Activated B cell treated with CpG ODN at 0.5 μM for 24 hours (primary cell): ENCODE measurements at regions of chr2 and their contacts with region 1.

Region 1: DNA sequence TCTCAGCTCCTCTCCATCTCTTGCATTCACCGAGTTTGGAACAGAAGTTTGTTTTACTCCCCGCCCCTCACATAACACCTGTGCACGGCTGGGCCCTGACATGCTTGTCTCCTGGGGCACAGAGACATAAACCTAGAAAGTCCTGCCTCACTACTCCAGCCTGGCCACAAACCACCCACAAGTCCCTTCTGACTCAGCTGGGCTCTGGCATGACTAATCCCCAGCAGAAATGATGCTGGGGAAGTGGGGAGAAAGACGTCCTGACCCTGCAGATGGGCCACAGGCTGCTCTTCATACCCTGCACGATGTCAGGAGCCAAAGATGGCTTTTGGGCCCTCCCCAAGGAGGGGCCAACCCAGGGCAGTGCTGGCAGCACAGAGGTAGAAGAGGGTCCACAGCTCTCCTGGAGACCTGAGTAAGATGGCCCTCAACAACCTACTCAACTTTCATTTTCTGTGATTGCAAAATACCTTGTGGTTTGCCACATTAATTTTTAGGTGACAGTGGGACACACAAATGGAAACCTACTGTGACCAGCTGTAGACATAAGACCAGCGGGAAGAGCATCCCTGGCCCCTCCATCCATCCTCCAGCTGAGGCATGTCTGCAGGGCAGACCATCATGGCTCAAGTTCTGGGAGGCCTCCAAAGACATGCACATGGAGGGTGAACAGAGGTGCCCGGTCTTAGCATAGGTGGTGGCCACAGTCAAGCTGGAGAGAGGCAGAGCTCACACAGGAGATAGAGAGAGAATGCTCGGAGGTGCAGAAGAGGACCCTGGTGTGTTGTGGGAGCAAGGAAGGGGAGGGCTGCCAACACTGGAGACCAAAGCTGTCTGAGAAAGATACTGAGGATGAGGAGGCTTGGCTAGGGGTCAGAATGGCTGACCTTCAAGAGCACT is 40.0 kb downstream of the DNMT3A start:
- DNase-seq: peak; percentile 61
- ATAC-seq: peak; percentile 95
- H3K4me3 Mint-ChIP-seq: peak overlapping the region; percentile 42
- H3K27ac Mint-ChIP-seq: peak overlapping the region; percentile 46
- H3K4me1 Mint-ChIP-seq: peaks cover 39% of the 10 kb centered on the region
- H3K27me3 Mint-ChIP-seq: no peaks in the 10 kb centered on the region
- CTCF ChIP-seq: no peak

Region 2: DNA sequence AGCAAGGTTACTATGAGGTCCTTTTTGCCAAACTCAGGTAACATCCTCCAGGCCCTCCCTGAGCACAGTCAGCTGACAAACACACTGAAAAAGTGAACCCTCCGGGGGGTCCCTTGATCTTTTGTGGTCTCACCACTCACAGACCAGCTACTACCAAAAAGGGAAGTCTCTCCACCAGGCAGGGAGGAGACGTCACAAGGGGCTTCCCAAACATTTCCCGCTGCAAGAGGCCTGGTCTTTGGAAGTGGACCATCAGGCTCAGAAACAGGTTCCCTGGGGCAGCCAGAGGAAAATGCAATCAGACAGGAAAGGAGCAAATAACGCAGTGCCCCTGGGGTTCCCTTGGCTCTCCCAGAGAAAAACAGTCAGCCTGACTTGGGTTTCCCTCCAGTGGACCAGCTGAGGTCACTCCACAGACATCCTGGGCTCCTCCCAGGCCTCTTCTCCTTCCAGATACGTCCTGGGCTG is 94.6 kb before region 1 on chr2:
- CTCF ChIA-PET with region 1: interaction called, 3 read pairs
- POLR2A ChIA-PET with region 1: interaction called, 8 read pairs
- intact Hi-C with region 1: loop called (anchors 1 kb)
- DNase-seq: no peak
- ATAC-seq: no peak
- H3K4me3 Mint-ChIP-seq: peak overlapping the region; percentile 59
- H3K27ac Mint-ChIP-seq: peak overlapping the region; percentile 31
- H3K4me1 Mint-ChIP-seq: peaks cover 65% of the 10 kb centered on the region
- H3K27me3 Mint-ChIP-seq: no peaks in the 10 kb centered on the region
- CTCF ChIP-seq: no peak

Region 3: DNA sequence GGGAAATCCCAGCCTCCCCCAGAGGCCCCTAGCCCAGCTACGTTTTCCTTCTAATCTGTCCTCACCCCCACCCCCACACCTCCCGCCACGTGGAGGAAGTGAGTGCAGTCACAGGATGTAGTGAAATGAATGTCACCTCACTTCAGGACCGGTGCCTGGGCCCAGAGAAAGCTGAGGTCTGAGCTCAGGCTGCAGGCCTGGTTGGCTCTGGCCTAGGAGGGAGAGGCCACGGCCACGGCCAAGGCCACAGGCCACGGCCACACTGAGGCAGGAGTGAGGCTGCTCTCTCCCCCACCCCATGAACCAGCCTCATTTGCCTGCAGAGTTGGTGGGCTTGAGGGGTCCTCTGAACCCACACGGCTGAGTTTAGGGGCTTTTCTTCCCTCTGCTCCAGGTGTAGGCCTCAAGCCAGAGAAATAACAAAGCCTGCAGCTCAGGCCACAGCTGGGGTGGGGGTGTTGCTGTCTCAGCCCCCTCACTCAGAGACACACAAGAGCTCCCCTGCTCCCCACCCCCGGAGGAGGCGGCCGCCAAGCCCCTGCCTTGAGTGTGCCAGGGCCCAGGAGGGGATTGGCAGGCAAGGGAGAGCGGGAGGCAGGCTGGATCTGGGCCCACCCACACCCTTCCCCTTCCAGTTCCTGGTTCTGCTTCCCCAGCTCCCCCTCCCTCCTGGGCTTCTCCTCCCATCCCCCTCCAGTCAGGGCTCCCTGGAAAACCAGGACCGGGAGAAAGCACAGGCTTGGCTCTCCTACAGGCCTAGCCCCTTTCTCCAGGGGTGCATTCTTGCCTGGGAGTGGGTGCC is 13.0 kb after region 1 on chr2:
- CTCF ChIA-PET with region 1: interaction called, 3 read pairs
- POLR2A ChIA-PET with region 1: interaction called, 10 read pairs
- intact Hi-C with region 1: no loop called
- DNase-seq: no peak
- ATAC-seq: peak; percentile 90
- H3K4me3 Mint-ChIP-seq: no peak overlapping the region
- H3K27ac Mint-ChIP-seq: no peak overlapping the region
- H3K4me1 Mint-ChIP-seq: peaks cover 37% of the 10 kb centered on the region
- H3K27me3 Mint-ChIP-seq: no peaks in the 10 kb centered on the region
- CTCF ChIP-seq: no peak

Region 4: GRCh38 chr2:25342372-25343186 is 40.9 kb after region 1 on chr2:
- CTCF ChIA-PET with region 1: interaction called, 4 read pairs
- POLR2A ChIA-PET with region 1: interaction called, 4 read pairs
- intact Hi-C with region 1: loop called (anchors 2 kb)
- DNase-seq: peak; percentile 82
- ATAC-seq: peak; percentile 92
- H3K4me3 Mint-ChIP-seq: peak overlapping the region; percentile 84
- H3K27ac Mint-ChIP-seq: peak overlapping the region; percentile 59
- H3K4me1 Mint-ChIP-seq: peaks cover 19% of the 10 kb centered on the region
- H3K27me3 Mint-ChIP-seq: peaks cover 1% of the 10 kb centered on the region
- CTCF ChIP-seq: peak; percentile 74

Region 5: GRCh38 chr2:25420820-25421237 is 119.1 kb after region 1 on chr2:
- CTCF ChIA-PET with region 1: no interaction called
- POLR2A ChIA-PET with region 1: interaction called, 6 read pairs
- intact Hi-C with region 1: loop called (anchors 1 kb)
- DNase-seq: no peak
- ATAC-seq: peak; percentile 29
- H3K4me3 Mint-ChIP-seq: peak overlapping the region; percentile 93
- H3K27ac Mint-ChIP-seq: peak overlapping the region; percentile 95
- H3K4me1 Mint-ChIP-seq: peaks cover 97% of the 10 kb centered on the region
- H3K27me3 Mint-ChIP-seq: no peaks in the 10 kb centered on the region
- CTCF ChIP-seq: no peak